HEK293 (cell line): ENCODE measurements at regions of chr12 and their contacts with region 1.

Region 1: GRCh38 chr12:53352331-53353256 is 16.4 kb upstream of the SP7 start:
- H3K4me3 ChIP-seq: no peak overlapping the region
- H3K27ac ChIP-seq: no peak overlapping the region
- H3K4me1 ChIP-seq: no peaks in the 10 kb centered on the region
- CTCF ChIP-seq: peak; percentile 71; the same call in 1 of the 2 replicates

Region 2: GRCh38 chr12:53365245-53365904 is 12.8 kb after region 1 on chr12:
- CTCF ChIA-PET with region 1: interaction called, 11 read pairs
- POLR2A ChIA-PET with region 1: no interaction called
- H3K4me3 ChIP-seq: no peak overlapping the region
- H3K27ac ChIP-seq: no peak overlapping the region
- H3K4me1 ChIP-seq: peaks cover under 1% of the 10 kb centered on the region
- CTCF ChIP-seq: no peak

Region 3: GRCh38 chr12:53391729-53392128 is 39.1 kb after region 1 on chr12:
- CTCF ChIA-PET with region 1: interaction called, 13 read pairs
- POLR2A ChIA-PET with region 1: interaction called, 4 read pairs
- H3K4me3 ChIP-seq: no peak overlapping the region
- H3K27ac ChIP-seq: peak overlapping the region; percentile 51; the same call in 1 of the 2 replicates
- H3K4me1 ChIP-seq: peaks cover 18% of the 10 kb centered on the region
- CTCF ChIP-seq: no peak

Region 4: DNA sequence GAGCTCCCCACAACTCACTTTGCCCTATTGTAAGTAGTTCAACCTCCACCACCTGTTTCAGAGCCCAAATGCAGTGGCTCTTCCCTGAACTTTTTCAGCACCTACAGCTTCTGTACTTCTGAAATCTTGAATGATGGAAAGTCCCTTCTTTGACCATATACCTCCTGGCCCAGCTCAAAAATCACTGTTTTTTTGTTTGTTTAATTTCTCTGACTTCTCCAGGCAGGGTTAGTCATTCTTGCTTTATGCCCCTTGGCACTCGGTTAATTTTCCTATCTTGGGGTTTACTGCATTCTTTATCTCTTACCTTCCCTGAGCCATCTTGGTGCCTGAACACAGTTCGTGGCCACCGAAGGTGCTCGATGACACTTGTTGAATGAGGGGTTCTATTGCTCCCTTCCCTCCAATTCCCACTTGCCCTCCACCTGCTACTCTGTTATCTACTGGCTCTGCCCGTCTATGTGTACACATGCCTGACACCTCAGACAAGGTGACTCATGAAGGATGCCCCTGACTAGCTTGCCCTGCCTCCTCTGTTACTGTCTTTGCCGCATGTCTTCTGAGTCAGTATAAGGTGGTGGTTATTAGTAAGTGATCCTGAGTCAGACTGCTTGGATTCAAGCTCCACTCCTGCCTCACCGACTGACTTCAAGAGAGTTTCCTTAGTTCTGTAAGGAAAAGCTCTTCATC is 75.5 kb after region 1 on chr12:
- CTCF ChIA-PET with region 1: interaction called, 134 read pairs
- POLR2A ChIA-PET with region 1: no interaction called
- H3K4me3 ChIP-seq: no peak overlapping the region
- H3K27ac ChIP-seq: no peak overlapping the region; the same call in 1 of the 2 replicates
- H3K4me1 ChIP-seq: peaks cover 12% of the 10 kb centered on the region
- CTCF ChIP-seq: no peak

Region 5: GRCh38 chr12:53500776-53501614 is 148.4 kb after region 1 on chr12 and contains the start of gene TARBP2:
- CTCF ChIA-PET with region 1: interaction called, 11 read pairs
- POLR2A ChIA-PET with region 1: interaction called, 5 read pairs
- H3K4me3 ChIP-seq: peak within 1 kb of the TSS; percentile 67
- H3K27ac ChIP-seq: peak within 1 kb of the TSS; percentile 94
- H3K4me1 ChIP-seq: peaks cover 16% of the 10 kb centered on the region
- CTCF ChIP-seq: peak; percentile 70